Heart left ventricle (tissue), 16 donors: ENCODE measurements at regions of chr2 and their contacts with region 1.

Region 1: DNA sequence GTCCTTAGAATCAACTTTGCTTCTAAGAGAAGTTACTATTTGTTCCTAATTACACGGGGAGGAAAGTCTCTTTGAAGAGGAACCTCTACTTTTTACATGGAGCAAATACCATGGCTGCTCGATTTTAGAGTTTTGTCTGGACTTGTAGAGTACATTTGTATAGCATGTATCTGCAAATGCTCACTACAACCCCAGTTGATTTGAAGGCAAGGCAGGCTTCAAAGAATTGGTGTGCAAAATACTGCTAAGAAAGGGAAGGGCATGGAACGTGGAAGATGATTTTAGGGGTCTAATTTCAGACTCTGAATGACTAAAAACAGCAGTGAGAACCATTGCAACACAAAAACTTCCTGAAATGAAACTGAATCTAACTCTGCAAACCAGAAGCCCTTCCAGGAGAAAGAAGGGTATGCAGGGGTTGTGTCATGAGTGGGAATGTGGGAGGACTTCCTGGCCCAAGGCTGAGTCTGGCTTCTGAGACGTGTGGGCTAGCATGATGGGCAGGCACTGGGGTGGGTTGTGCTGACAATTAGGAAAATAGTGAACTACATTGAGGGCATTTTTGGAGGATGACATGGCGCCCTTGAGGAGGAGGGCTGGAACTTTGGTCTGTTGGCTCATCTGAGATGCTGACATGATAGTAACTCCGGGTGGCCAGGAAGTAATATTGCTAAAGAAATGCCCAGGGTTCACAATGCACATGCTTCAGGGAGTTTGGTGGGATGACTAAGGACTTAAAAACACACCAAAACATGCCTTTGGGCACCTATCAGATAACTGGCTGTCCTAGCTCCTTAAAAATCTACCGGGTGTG is 18.9 kb upstream of the IL1R2 start:
- DNase-seq: no peak
- ATAC-seq: peak in 3 of 4 donors; percentile 42 to 76 (median 69)
- H3K4me3 ChIP-seq: no peak overlapping the region
- H3K27ac ChIP-seq: peak overlapping the region in 1 of 12 donors; percentile 66
- H3K4me1 ChIP-seq: peaks cover 0 to 38% (median 0%) of the 10 kb centered on the region in 12 donors
- H3K27me3 ChIP-seq: no peaks in the 10 kb centered on the region
- CTCF ChIP-seq: no peak
- POLR2A ChIP-seq: no peak

Region 2: GRCh38 chr2:101823347-101823791 is 149.5 kb before region 1 on chr2:
- intact Hi-C with region 1: no loop called
- DNase-seq: peak in 4 of 5 donors; percentile 55 to 64 (median 58)
- ATAC-seq: peak in 3 of 4 donors; percentile 59 to 77 (median 66)
- H3K4me3 ChIP-seq: no peak overlapping the region
- H3K27ac ChIP-seq: peak overlapping the region in 2 of 12 donors; percentile 8 to 15
- H3K4me1 ChIP-seq: peaks cover 12 to 82% (median 60%) of the 10 kb centered on the region in 12 donors
- H3K27me3 ChIP-seq: no peaks in the 10 kb centered on the region
- CTCF ChIP-seq: peak; percentile 47 to 74 (median 61)
- POLR2A ChIP-seq: no peak

Region 3: GRCh38 chr2:101893681-101894381 is 79.0 kb before region 1 on chr2:
- intact Hi-C with region 1: loop called in 1 of 10 experiments (anchors 10 kb)
- DNase-seq: no peak
- ATAC-seq: no peak
- H3K4me3 ChIP-seq: no peak overlapping the region
- H3K27ac ChIP-seq: no peak overlapping the region
- H3K4me1 ChIP-seq: peaks cover 0 to 13% (median 0%) of the 10 kb centered on the region in 12 donors
- H3K27me3 ChIP-seq: no peaks in the 10 kb centered on the region
- CTCF ChIP-seq: no peak
- POLR2A ChIP-seq: no peak

Region 4: DNA sequence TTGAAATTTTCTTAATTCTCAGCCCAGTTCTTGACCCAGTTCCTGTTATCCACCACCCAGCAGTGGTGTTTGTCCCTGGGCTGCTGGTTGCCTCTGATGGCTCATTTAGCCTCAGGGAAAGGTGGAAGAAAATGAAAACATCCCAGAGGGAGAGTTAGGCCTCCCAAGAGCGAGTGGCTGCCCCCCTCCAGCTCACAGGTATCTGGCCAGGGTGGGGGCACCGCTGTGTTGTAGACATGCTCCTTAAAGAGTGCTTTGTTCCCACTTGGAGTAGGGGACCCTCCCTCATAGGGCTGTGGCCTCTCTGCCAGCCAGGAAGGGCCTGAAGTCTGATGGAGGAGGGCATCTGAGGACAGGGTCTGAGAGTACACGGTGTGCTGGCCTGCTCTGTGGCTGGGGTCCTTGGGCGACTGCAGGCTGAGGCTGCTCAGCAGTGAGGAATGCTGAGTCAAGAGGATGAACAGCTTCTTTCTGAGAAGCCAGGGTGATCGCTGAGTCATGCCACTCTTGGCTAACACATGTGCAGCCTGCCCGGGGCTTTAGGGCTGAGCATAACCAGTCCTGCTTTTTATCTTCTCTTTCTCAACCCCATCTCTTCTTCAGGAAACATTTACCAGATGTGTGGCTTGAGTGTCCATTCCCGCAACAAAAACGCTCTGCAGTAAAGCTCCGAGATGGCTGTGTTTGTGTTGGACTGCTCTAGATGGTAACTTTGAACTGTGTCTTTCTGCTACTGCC is 91.3 kb after region 1 on chr2:
- intact Hi-C with region 1: no loop called
- DNase-seq: peak; percentile 80 to 95 (median 87)
- ATAC-seq: peak; percentile 85 to 94 (median 92)
- H3K4me3 ChIP-seq: peak overlapping the region in 3 of 12 donors; percentile 11 to 12 (median 11)
- H3K27ac ChIP-seq: peak overlapping the region; percentile 77 to 97 (median 90)
- H3K4me1 ChIP-seq: peaks cover 0 to 79% (median 52%) of the 10 kb centered on the region in 12 donors
- H3K27me3 ChIP-seq: no peaks in the 10 kb centered on the region
- CTCF ChIP-seq: no peak
- POLR2A ChIP-seq: no peak

Region 5: GRCh38 chr2:102424754-102425153 is 451.9 kb after region 1 on chr2:
- intact Hi-C with region 1: no loop called
- DNase-seq: no peak
- ATAC-seq: peak in 1 of 4 donors; percentile 33
- H3K4me3 ChIP-seq: no peak overlapping the region
- H3K27ac ChIP-seq: no peak overlapping the region
- H3K4me1 ChIP-seq: peaks cover 0 to 26% (median 0%) of the 10 kb centered on the region in 12 donors
- H3K27me3 ChIP-seq: peaks cover 0 to 7% (median 0%) of the 10 kb centered on the region in 9 donors
- CTCF ChIP-seq: no peak
- POLR2A ChIP-seq: no peak